Right ventricle myocardium inferior (tissue), 1 donor: ENCODE measurements at regions of chr19 and their contacts with region 1.

Region 1: GRCh38 chr19:4636151-4636717 is 3.1 kb upstream of the TNFAIP8L1 start:
- DNase-seq: peak; percentile 87
- ATAC-seq: peak; percentile 27

Region 2: GRCh38 chr19:4576016-4576933 is 60.0 kb before region 1 on chr19:
- intact Hi-C with region 1: loop called (anchors 1 kb)
- DNase-seq: peak; percentile 86
- ATAC-seq: peak; percentile 40

Region 3: GRCh38 chr19:4609878-4610511 is 26.2 kb before region 1 on chr19:
- intact Hi-C with region 1: no loop called
- DNase-seq: no peak
- ATAC-seq: peak; percentile 86